ENCODE measurements at regions of chr1 and their contacts with region 1.

Region 1: GRCh38 chr1:52636721-52637695 is 4.0 kb downstream of the SHISAL2A start:
- DNase-seq: peak; percentile 83 to 92 (median 85)
- H3K4me3 ChIP-seq: peak overlapping the region; percentile 0 to 20
- H3K4me3 Mint-ChIP-seq: peak overlapping the region; percentile 77 to 91 (median 87)
- H3K27ac ChIP-seq: peak overlapping the region; percentile 85
- H3K27ac Mint-ChIP-seq: peak overlapping the region; percentile 96 to 100 (median 100)
- H3K4me1 ChIP-seq: peaks cover 92% of the 10 kb centered on the region
- H3K4me1 Mint-ChIP-seq: peaks cover 61 to 86% (median 75%) of the 10 kb centered on the region in 4 donors
- H3K27me3 ChIP-seq: no peaks in the 10 kb centered on the region
- H3K27me3 Mint-ChIP-seq: no peaks in the 10 kb centered on the region

Region 2: DNA sequence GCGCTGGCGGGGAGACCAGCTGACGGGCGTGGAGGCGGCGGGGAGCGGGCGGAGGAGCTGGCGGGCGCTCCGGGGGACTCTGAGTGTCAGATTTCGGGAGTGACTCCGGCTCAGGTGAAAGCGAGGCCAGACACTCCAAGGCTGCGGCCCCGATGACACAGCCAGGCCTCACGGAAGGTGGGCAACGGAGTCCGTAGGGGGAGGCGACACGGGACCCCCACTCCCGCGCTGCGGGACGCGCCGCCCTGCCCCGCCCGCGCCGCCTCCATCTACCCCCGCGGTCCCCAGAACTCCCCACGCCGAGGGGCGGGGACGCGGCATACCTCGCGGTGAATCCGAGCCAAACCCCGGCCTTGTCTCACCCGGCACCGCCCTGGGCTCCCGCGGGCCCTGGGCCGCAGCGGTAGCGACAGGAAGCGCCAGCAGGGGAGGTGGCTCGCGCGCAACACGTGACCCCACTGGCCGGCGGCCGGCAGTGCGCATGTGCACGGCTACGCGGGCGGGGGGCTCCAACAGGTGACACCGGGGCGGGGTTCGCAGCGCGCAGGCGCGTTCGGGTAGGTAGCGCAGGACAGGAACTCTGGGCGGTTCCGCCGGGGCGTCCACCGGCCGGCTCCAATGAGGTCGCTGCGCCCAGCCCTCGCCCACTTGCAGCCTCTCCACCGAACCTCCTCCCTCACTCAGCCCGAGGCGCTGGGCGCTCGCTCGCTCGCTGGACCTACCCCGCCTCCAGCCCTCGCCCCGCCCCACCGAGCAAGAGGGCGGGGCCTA is 271.1 kb before region 1 on chr1 and contains the start of gene CC2D1B:
- CTCF ChIA-PET with region 1: no interaction called
- POLR2A ChIA-PET with region 1: interaction called, 19 read pairs
- intact Hi-C with region 1: loop called (anchors 5 kb)
- DNase-seq: peak; percentile 98 to 100 (median 100)
- H3K4me3 ChIP-seq: peak within 1 kb of the TSS; percentile 53 to 88
- H3K4me3 Mint-ChIP-seq: peak within 1 kb of the TSS; percentile 90 to 97 (median 92)
- H3K27ac ChIP-seq: peak within 1 kb of the TSS; percentile 78
- H3K27ac Mint-ChIP-seq: peak within 1 kb of the TSS; percentile 90 to 97 (median 95)
- H3K4me1 ChIP-seq: peaks cover 32% of the 10 kb centered on the region
- H3K4me1 Mint-ChIP-seq: peaks cover 20 to 56% (median 41%) of the 10 kb centered on the region in 4 donors
- H3K27me3 ChIP-seq: no peaks in the 10 kb centered on the region
- H3K27me3 Mint-ChIP-seq: no peaks in the 10 kb centered on the region
- total RNA-seq, gene CC2D1B: 83.7 to 84.1 TPM

Region 3: GRCh38 chr1:52424231-52424636 is 212.8 kb before region 1 on chr1:
- CTCF ChIA-PET with region 1: interaction called, 6 read pairs
- POLR2A ChIA-PET with region 1: interaction called, 25 read pairs
- intact Hi-C with region 1: loop called (anchors 2 kb)
- DNase-seq: peak; percentile 65 to 86 (median 71)
- H3K4me3 ChIP-seq: peak overlapping the region in 1 of 2 donors; percentile 4
- H3K4me3 Mint-ChIP-seq: peak overlapping the region; percentile 66 to 83 (median 74)
- H3K27ac ChIP-seq: peak overlapping the region; percentile 53
- H3K27ac Mint-ChIP-seq: peak overlapping the region; percentile 91 to 99 (median 94)
- H3K4me1 ChIP-seq: peaks cover 57% of the 10 kb centered on the region
- H3K4me1 Mint-ChIP-seq: peaks cover 38 to 49% (median 46%) of the 10 kb centered on the region in 4 donors
- H3K27me3 ChIP-seq: no peaks in the 10 kb centered on the region
- H3K27me3 Mint-ChIP-seq: no peaks in the 10 kb centered on the region

Region 4: DNA sequence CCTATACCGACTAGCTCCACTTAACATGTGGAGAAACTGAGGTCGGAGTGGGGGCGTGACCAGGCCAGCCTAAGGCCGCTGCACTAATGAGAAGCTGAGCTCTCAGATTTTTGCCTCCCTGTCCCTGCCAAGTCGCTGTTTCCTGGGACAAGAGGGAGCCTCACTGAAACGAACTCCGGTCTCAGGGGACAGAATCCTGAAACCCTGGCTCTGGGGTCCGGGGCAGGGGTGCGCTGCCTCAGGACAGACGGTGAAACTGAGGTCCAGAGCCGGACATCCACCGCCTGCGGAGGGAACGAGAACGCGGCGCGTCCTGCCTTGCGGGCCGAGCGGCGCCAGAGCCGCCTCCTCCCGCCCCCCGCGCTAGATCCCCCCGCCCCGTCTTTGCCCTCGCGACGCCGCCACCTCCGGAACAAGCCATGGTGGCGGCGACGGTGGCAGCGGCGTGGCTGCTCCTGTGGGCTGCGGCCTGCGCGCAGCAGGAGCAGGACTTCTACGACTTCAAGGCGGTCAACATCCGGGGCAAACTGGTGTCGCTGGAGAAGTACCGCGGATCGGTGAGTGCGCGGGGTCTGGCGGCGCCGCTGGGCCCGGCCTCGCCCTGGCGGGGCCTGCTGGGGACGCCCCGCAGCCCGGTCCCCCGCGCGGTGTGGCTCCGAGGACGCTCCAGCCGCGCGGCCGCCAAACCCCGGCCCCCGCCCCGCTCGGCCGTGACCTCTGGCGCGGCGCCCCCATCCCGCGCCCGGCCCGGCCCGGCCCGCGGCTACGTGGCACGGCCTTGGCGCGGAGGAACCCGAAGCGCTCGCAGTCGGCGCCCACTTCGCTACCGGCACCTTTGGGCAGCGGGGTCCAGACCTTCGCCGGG is 34.8 kb before region 1 on chr1 and contains the start of gene GPX7:
- CTCF ChIA-PET with region 1: interaction called, 15 read pairs
- POLR2A ChIA-PET with region 1: interaction called, 188 read pairs
- intact Hi-C with region 1: loop called (anchors 1 kb)
- DNase-seq: peak; percentile 61 to 68 (median 65)
- H3K4me3 ChIP-seq: peak within 1 kb of the TSS; percentile 60 to 64
- H3K4me3 Mint-ChIP-seq: peak within 1 kb of the TSS; percentile 89 to 94 (median 92)
- H3K27ac ChIP-seq: peak within 1 kb of the TSS; percentile 69
- H3K27ac Mint-ChIP-seq: peak within 1 kb of the TSS; percentile 89 to 97 (median 94)
- H3K4me1 ChIP-seq: peaks cover 39% of the 10 kb centered on the region
- H3K4me1 Mint-ChIP-seq: peaks cover 38 to 57% (median 47%) of the 10 kb centered on the region in 4 donors
- H3K27me3 ChIP-seq: no peaks in the 10 kb centered on the region
- H3K27me3 Mint-ChIP-seq: no peaks in the 10 kb centered on the region
- total RNA-seq, gene GPX7: 26.3 to 27.5 TPM

Region 5: DNA sequence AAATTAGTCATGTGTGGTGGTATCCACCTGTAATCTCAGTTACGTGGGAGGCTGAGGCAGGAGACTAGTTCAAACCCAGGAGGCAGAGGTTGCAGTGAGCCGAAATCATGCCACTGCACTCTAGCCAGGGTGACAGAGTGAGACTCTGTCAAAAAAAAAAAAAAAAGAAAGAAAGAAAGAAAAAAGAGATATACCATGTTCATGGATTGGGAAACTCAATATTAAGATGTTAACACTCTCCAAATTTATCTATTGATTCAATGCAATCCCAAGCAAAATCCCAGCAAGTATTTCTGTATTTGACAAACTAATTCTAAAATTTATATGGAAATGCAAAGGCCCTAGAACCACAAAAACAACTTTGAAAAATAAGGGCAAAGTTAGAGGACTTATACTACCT is 15.1 kb before region 1 on chr1:
- CTCF ChIA-PET with region 1: interaction called, 12 read pairs
- POLR2A ChIA-PET with region 1: interaction called, 13 read pairs
- intact Hi-C with region 1: no loop called
- DNase-seq: no peak
- H3K4me3 ChIP-seq: no peak overlapping the region
- H3K4me3 Mint-ChIP-seq: no peak overlapping the region
- H3K27ac ChIP-seq: no peak overlapping the region
- H3K27ac Mint-ChIP-seq: no peak overlapping the region
- H3K4me1 ChIP-seq: no peaks in the 10 kb centered on the region
- H3K4me1 Mint-ChIP-seq: peaks cover 6 to 22% (median 15%) of the 10 kb centered on the region in 4 donors
- H3K27me3 ChIP-seq: no peaks in the 10 kb centered on the region
- H3K27me3 Mint-ChIP-seq: no peaks in the 10 kb centered on the region

Region 6: GRCh38 chr1:52751589-52752483 is 114.8 kb after region 1 on chr1:
- CTCF ChIA-PET with region 1: no interaction called
- POLR2A ChIA-PET with region 1: no interaction called
- intact Hi-C with region 1: no loop called
- DNase-seq: no peak
- H3K4me3 ChIP-seq: no peak overlapping the region
- H3K4me3 Mint-ChIP-seq: no peak overlapping the region
- H3K27ac ChIP-seq: no peak overlapping the region
- H3K27ac Mint-ChIP-seq: peak overlapping the region in 1 of 7 donors; percentile 67
- H3K4me1 ChIP-seq: no peaks in the 10 kb centered on the region
- H3K4me1 Mint-ChIP-seq: peaks cover 16 to 27% (median 20%) of the 10 kb centered on the region in 4 donors
- H3K27me3 ChIP-seq: no peaks in the 10 kb centered on the region
- H3K27me3 Mint-ChIP-seq: no peaks in the 10 kb centered on the region

Measured in CD4-positive, alpha-beta memory T cell (primary cell).